GM12878 (cell line): ENCODE measurements at regions of chr12 and their contacts with region 1.

Region 1: DNA sequence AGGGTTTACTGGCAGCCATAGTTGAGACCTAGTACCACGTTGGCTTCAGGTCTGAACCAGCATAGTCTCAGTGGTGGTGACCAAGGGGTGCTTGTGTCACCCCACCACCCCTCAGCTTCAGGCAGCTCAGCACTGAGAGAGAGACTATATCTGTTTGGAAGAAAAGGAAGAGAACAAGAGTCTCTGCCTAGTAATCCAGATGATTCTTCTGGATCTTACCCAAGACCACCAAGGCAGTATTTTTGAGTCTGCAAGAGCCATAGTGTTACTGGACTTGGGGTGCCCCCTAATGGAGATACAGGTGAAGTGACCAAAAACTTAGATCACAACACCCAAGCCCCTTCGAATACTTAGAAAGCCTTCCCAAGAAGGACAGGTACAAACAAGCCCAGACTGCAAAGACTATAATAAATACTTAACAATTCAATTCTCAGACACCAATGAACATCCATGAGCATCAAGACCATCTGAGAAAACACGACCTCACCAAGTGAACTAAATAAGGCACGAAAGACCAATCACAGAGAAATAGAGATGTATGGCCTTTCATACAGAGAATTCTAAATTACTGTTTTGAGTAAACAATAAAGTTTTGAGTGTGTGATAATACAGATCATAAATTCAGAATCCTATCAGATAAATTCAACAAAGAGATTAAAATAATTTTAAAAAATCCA is 107.0 kb downstream of the HELB start:
- DNase-seq: no peak
- ATAC-seq: peak; percentile 87
- H3K4me3 ChIP-seq: no peak overlapping the region
- H3K27ac ChIP-seq: no peak overlapping the region
- H3K4me1 ChIP-seq: no peaks in the 10 kb centered on the region
- H3K27me3 ChIP-seq: no peaks in the 10 kb centered on the region
- CTCF ChIP-seq: peak; percentile 57 to 70 (median 61); a peak in 5 of 6 replicates
- EP300 ChIP-seq: no peak
- POLR2A ChIP-seq: no peak
- RAD21 ChIP-seq: peak; percentile 82

Region 2: GRCh38 chr12:65306366-65307168 is 1102.8 kb before region 1 on chr12:
- CTCF ChIA-PET with region 1: no interaction called
- POLR2A ChIA-PET with region 1: no interaction called
- RAD21 ChIA-PET with region 1: no interaction called
- SMC1A ChIA-PET with region 1: no interaction called
- in situ Hi-C with region 1: no loop called
- intact Hi-C with region 1: loop called (anchors 5 kb)
- DNase-seq: no peak
- ATAC-seq: peak; percentile 76
- H3K4me3 ChIP-seq: no peak overlapping the region
- H3K27ac ChIP-seq: no peak overlapping the region
- H3K4me1 ChIP-seq: no peaks in the 10 kb centered on the region
- H3K27me3 ChIP-seq: no peaks in the 10 kb centered on the region
- CTCF ChIP-seq: peak; percentile 46 to 60 (median 56)
- EP300 ChIP-seq: no peak
- POLR2A ChIP-seq: no peak
- RAD21 ChIP-seq: peak; percentile 70

Region 3: DNA sequence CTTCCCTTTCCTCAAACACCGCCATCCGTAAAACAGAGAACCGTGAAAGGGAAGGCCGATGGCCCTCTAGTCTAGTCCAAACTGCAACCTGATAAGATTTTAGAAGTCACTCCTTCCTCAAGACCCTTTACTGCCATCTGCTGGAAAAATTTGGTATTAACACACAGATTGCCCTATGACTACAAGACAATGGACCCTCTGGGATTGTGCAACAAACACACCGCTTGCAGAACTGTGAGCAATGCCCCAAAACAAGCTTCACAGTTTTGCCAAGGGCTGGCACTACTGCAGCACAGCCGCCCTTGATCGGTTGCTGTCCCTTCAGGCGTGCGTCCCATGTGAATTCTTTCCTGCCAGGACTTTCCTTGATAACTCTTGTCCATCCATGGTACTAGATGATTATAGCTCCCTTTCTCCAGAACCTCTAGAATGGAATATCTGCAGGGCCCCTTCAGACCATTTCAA is 301.9 kb before region 1 on chr12:
- CTCF ChIA-PET with region 1: interaction called, 3 read pairs
- POLR2A ChIA-PET with region 1: no interaction called
- RAD21 ChIA-PET with region 1: interaction called, 6 read pairs
- SMC1A ChIA-PET with region 1: interaction called, 7 read pairs
- in situ Hi-C with region 1: no loop called
- intact Hi-C with region 1: loop called (anchors 5 kb)
- DNase-seq: peak; percentile 56
- ATAC-seq: peak; percentile 97
- H3K4me3 ChIP-seq: no peak overlapping the region
- H3K27ac ChIP-seq: no peak overlapping the region
- H3K4me1 ChIP-seq: no peaks in the 10 kb centered on the region
- H3K27me3 ChIP-seq: no peaks in the 10 kb centered on the region
- CTCF ChIP-seq: peak; percentile 67 to 83 (median 75)
- EP300 ChIP-seq: no peak
- POLR2A ChIP-seq: no peak
- RAD21 ChIP-seq: peak; percentile 90

Region 4: GRCh38 chr12:66269757-66270383 is 139.5 kb before region 1 on chr12:
- CTCF ChIA-PET with region 1: interaction called, 25 read pairs
- POLR2A ChIA-PET with region 1: no interaction called
- RAD21 ChIA-PET with region 1: interaction called, 17 read pairs
- SMC1A ChIA-PET with region 1: interaction called, 13 read pairs
- in situ Hi-C with region 1: loop called (anchors 5 kb)
- intact Hi-C with region 1: loop called (anchors 1 kb)
- DNase-seq: peak; percentile 5
- ATAC-seq: peak; percentile 80
- H3K4me3 ChIP-seq: no peak overlapping the region
- H3K27ac ChIP-seq: no peak overlapping the region
- H3K4me1 ChIP-seq: peaks cover 12% of the 10 kb centered on the region
- H3K27me3 ChIP-seq: no peaks in the 10 kb centered on the region
- CTCF ChIP-seq: peak; percentile 46 to 59 (median 53); a peak in 5 of 6 replicates
- EP300 ChIP-seq: no peak
- POLR2A ChIP-seq: no peak
- RAD21 ChIP-seq: peak; percentile 73

Region 5: DNA sequence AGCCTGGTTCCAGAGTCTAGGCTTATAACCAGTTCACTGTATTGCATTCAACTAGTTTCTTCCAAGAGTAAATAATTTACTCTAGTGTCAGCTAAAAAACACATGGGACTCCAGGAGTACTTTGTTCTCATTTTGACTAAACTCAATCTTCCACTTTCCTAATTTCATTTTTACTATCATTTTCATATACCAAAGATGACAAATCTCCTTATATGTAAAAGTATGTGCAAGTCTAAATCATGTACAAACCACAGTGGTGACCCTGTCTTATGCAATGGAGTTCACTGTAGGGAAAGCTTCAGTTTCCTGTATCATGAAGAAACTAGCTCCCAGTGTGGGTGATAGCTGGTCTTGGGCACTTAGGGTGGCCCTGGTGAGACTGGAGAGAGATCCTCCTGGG is 44.5 kb after region 1 on chr12:
- CTCF ChIA-PET with region 1: no interaction called
- POLR2A ChIA-PET with region 1: no interaction called
- RAD21 ChIA-PET with region 1: no interaction called
- SMC1A ChIA-PET with region 1: no interaction called
- in situ Hi-C with region 1: no loop called
- intact Hi-C with region 1: no loop called
- DNase-seq: no peak
- ATAC-seq: peak; percentile 44; the same call in 1 of the 3 replicates
- H3K4me3 ChIP-seq: no peak overlapping the region
- H3K27ac ChIP-seq: no peak overlapping the region
- H3K4me1 ChIP-seq: no peaks in the 10 kb centered on the region
- H3K27me3 ChIP-seq: no peaks in the 10 kb centered on the region
- CTCF ChIP-seq: no peak
- EP300 ChIP-seq: no peak
- POLR2A ChIP-seq: no peak
- RAD21 ChIP-seq: no peak

Region 6: DNA sequence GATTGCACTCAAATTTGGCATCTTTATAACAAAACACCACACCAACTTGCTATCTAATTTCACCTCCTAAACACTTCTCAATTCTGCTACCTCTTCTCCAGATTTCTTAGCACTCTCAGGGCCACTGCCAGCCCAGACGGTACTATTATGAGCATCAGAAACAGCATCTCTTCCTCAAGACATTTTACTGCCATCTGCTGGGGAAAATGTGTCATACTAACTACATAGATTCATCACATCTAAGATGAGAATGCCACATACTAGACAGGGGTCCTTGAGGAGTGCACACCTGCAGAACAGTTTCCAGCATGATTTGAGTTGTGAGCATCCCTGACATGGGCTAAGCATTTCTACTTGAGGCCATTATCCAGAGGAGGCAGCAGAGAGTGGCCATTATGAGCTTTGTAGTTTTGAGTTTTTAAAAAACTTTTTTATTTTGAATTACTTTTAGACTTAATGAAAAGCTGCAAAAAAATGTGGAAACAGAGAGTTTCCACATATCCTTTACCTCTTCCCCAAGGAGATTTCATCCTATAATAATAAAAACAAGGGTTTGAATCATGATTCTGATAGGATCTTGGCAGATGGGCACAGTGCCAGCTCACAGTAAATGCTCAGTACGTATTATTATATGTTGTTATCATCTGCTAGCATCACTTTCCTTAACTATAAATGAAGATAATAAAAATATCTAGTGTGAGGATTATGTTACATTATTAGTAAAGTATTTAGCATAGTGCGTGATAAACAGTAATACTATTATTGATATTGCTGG is 284.8 kb after region 1 on chr12:
- CTCF ChIA-PET with region 1: interaction called, 4 read pairs
- POLR2A ChIA-PET with region 1: no interaction called
- RAD21 ChIA-PET with region 1: no interaction called
- SMC1A ChIA-PET with region 1: no interaction called
- in situ Hi-C with region 1: no loop called
- intact Hi-C with region 1: loop called (anchors 10 kb)
- DNase-seq: peak; percentile 23
- ATAC-seq: peak; percentile 97
- H3K4me3 ChIP-seq: no peak overlapping the region
- H3K27ac ChIP-seq: no peak overlapping the region
- H3K4me1 ChIP-seq: peaks cover 5% of the 10 kb centered on the region; the same call in 1 of the 2 replicates
- H3K27me3 ChIP-seq: no peaks in the 10 kb centered on the region
- CTCF ChIP-seq: peak; percentile 54 to 67 (median 61); a peak in 5 of 6 replicates
- EP300 ChIP-seq: no peak
- POLR2A ChIP-seq: no peak
- RAD21 ChIP-seq: peak; percentile 93